ENCODE measurements at regions of chr2 and their contacts with region 1.

Region 1: GRCh38 chr2:3443506-3444073 is 64.1 kb downstream of the TRAPPC12 start:
- DNase-seq: no peak
- H3K4me3 ChIP-seq: no peak overlapping the region
- H3K27ac ChIP-seq: no peak overlapping the region
- H3K4me1 ChIP-seq: no peaks in the 10 kb centered on the region
- H3K27me3 ChIP-seq: no peaks in the 10 kb centered on the region
- CTCF ChIP-seq: no peak
- POLR2A ChIP-seq: no peak

Region 2: GRCh38 chr2:2879781-2880180 is 563.8 kb before region 1 on chr2:
- intact Hi-C with region 1: loop called (anchors 5 kb)
- DNase-seq: no peak
- H3K4me3 ChIP-seq: no peak overlapping the region
- H3K27ac ChIP-seq: no peak overlapping the region
- H3K4me1 ChIP-seq: no peaks in the 10 kb centered on the region
- H3K27me3 ChIP-seq: peaks cover 0 to 10% of the 10 kb centered on the region in 2 donors
- CTCF ChIP-seq: no peak
- POLR2A ChIP-seq: no peak

Measured in breast epithelium (tissue), 4 donors.